ENCODE measurements at regions of chr9 and their contacts with region 1.

Region 1: GRCh38 chr9:4604678-4605095 is 57.4 kb upstream of the PLPP6 start:
- DNase-seq: peak; percentile 70
- CTCF ChIP-seq: peak; percentile 74

Region 2: DNA sequence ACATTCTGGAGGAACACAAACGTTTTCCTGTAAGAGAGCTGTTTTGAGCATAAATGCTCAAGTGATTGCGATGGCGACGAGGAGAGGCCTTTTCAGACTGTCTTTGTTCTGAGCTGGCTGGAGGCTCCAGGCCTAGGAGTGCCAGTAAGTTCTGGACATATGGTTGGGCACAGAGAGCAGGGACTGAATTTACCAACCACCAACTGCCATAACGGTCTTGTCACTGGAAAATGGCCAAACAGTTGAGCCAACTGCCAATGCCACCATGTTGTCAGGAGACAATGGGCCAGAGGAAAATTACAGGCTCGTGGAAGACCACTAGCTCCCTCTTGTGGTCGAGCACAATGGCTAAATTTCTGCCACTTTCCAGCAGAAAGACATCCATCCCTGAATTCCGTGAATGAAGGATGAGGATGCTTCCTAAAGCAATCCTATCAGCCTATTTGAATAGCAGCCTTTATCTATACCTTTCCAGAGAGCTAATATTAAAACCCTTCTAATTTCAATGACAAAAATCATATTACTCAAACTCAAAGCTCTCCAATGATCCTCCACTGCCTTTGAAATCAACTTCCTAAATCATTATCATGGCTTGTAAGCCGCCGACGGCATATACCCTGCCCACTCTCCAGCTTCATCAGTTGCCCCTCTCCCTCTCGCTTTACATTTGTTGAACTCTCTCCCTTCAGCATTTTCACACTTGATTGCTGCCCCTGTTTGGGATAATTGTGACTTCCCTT is 237.9 kb before region 1 on chr9:
- CTCF ChIA-PET with region 1: no interaction called
- POLR2A ChIA-PET with region 1: no interaction called
- DNase-seq: peak; percentile 34
- CTCF ChIP-seq: peak; percentile 64

Region 3: GRCh38 chr9:4592886-4593285 is 11.8 kb before region 1 on chr9:
- CTCF ChIA-PET with region 1: interaction called, 13 read pairs
- POLR2A ChIA-PET with region 1: no interaction called
- DNase-seq: no peak
- CTCF ChIP-seq: no peak

Region 4: GRCh38 chr9:4615251-4615650 is 10.6 kb after region 1 on chr9:
- CTCF ChIA-PET with region 1: interaction called, 18 read pairs
- POLR2A ChIA-PET with region 1: no interaction called
- DNase-seq: no peak
- CTCF ChIP-seq: no peak